ENCODE measurements at regions of chr9 and their contacts with region 1.

Region 1: GRCh38 chr9:130417602-130418001 is 27.2 kb upstream of the ASS1 start:
- DNase-seq: no peak
- ATAC-seq: no peak
- H3K4me3 ChIP-seq: no peak overlapping the region
- H3K27ac ChIP-seq: no peak overlapping the region
- H3K4me1 ChIP-seq: no peaks in the 10 kb centered on the region
- H3K27me3 ChIP-seq: no peaks in the 10 kb centered on the region
- CTCF ChIP-seq: no peak; the same call in 1 of the 2 replicates

Region 2: GRCh38 chr9:130226112-130226681 is 191.4 kb before region 1 on chr9:
- CTCF ChIA-PET with region 1: no interaction called
- POLR2A ChIA-PET with region 1: interaction called, 12 read pairs
- in situ Hi-C with region 1: no loop called
- intact Hi-C with region 1: no loop called
- DNase-seq: no peak
- ATAC-seq: no peak
- H3K4me3 ChIP-seq: no peak overlapping the region
- H3K27ac ChIP-seq: no peak overlapping the region
- H3K4me1 ChIP-seq: no peaks in the 10 kb centered on the region
- H3K27me3 ChIP-seq: no peaks in the 10 kb centered on the region
- CTCF ChIP-seq: no peak

Region 3: DNA sequence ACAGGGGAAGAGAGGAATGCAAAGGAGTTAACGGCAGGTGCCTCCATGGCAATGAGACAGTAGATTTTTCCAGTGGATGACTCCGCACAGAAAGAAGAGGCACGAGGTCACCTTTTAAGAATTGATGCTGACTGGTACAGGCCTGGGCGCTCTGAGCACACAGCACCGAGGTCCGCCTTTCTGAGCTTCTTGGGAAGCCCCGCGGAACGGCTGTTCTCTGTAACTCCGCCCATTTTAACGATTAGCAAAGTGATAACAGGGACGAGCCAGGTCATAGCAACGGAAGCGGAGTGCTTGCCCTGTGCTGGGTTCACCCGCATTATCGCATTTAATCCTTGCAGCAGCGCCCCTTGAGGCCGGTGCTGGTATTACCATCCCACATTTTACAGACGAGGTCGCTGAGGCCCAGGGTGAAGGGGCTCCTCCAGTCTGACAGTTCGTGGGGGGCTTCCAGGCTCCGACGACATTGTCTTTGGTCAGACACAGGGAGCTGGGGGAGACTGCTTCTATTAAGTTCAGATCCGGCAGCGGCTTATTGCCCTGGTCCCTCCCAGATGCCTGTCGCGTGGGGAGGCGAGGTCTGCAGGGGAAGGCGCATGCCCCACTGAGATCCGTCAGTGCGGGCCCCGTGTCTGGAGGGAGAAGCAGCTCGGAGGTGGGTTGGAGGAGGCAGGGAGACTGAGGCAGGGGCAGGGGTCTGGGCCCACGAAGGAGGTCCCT is 174.4 kb before region 1 on chr9:
- CTCF ChIA-PET with region 1: no interaction called
- POLR2A ChIA-PET with region 1: no interaction called
- in situ Hi-C with region 1: no loop called
- intact Hi-C with region 1: loop called (anchors 10 kb)
- DNase-seq: no peak
- ATAC-seq: peak; percentile 79
- H3K4me3 ChIP-seq: peak overlapping the region in 1 of 2 experiments; percentile 26; a peak in 1 of 4 replicates
- H3K27ac ChIP-seq: no peak overlapping the region
- H3K4me1 ChIP-seq: no peaks in the 10 kb centered on the region
- H3K27me3 ChIP-seq: no peaks in the 10 kb centered on the region
- CTCF ChIP-seq: peak; percentile 91

Region 4: GRCh38 chr9:130387905-130388304 is 29.7 kb before region 1 on chr9:
- CTCF ChIA-PET with region 1: no interaction called
- POLR2A ChIA-PET with region 1: no interaction called
- in situ Hi-C with region 1: no loop called
- intact Hi-C with region 1: no loop called
- DNase-seq: no peak
- ATAC-seq: no peak
- H3K4me3 ChIP-seq: no peak overlapping the region
- H3K27ac ChIP-seq: no peak overlapping the region
- H3K4me1 ChIP-seq: no peaks in the 10 kb centered on the region
- H3K27me3 ChIP-seq: no peaks in the 10 kb centered on the region
- CTCF ChIP-seq: no peak

Measured in Panc1 (cell line).